Dendritic cell treated with granulocyte-macrophage colony-stimulating factor and Interleukin-4, amounts not matched to agents 40 ng/mL and 50 ng/mL, for 4 days (primary cell): ENCODE measurements at regions of chr2 and their contacts with region 1.

Region 1: DNA sequence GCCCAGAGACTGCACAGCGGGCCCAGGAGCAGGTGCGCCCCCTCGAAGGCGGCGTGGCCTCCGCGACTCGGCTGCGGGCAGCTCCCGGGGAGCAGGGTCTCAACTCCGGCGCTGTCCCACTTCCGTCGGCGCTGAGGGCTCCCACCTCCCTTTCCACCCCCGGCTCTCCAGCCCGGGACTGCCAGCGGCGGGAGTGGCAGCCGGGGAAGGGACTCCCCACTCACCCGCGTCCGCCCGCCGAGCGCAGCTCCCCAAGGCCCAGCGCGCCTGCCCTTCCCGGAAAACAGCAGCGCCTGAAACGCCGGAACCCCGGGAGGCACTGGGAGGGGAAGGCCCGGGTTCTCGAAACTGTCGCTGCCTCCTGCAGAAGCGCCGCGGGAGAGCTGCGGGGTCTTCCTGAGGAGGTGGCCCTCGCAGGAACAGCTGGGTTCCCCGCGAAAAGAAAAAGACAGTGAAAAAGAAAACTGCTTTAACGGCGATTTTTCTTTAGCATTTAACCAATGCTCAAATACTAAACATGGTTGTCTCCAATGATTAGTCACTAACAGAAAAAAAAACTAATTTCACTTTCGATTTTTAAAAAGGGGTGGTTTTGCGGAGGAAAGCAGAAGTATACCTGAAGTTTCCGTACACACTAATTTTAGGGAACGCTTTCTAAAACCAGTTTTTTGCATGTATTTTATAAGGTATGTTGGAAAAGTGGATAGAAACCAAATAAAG is at the start of gene NMI:
- H3K4me3 Mint-ChIP-seq: peak within 1 kb of the TSS; percentile 83
- H3K27ac Mint-ChIP-seq: peak within 1 kb of the TSS; percentile 96
- H3K4me1 Mint-ChIP-seq: peaks cover 38% of the 10 kb centered on the region
- H3K27me3 Mint-ChIP-seq: no peaks in the 10 kb centered on the region

Region 2: DNA sequence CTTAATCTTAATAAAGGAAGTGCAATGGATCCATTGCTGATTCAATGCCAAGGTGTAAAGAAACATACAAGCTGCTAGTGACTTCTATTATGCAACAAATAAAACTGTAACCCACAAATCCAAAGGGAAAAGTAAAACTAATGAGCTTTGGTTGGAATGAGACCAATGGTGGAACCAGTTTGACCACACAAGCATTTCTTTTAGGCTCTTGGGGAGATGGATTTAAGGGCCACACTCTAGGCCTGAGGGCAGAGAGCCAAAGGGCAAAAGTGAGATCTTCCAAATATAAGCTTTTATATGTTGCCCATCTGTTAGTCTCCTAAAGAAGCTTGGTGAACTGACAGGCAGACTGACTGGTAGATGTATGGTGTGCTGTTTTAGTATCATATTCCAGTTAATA is 1660.5 kb before region 1 on chr2:
- intact Hi-C with region 1: no loop called
- H3K4me3 Mint-ChIP-seq: no peak overlapping the region
- H3K27ac Mint-ChIP-seq: no peak overlapping the region
- H3K4me1 Mint-ChIP-seq: peaks cover 10% of the 10 kb centered on the region
- H3K27me3 Mint-ChIP-seq: no peaks in the 10 kb centered on the region

Region 3: DNA sequence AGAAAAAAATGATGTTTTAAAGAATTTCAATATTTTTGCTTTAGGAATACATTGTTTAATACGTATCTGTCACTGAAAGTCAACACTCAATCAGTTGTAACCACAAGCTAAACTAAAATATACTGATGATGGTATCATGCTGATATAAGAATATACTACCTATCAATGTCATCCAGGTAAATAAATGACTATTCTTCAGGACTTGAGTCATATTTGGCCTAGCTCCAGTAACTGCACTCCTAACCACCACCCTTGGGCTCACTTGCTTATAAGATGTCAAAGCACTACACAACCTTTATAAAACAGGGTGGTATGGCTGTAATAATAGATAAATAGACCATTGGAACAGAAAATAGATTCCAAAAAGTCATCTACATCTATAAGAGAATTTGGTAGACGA is 850.9 kb before region 1 on chr2:
- intact Hi-C with region 1: no loop called
- H3K4me3 Mint-ChIP-seq: no peak overlapping the region
- H3K27ac Mint-ChIP-seq: no peak overlapping the region
- H3K4me1 Mint-ChIP-seq: no peaks in the 10 kb centered on the region
- H3K27me3 Mint-ChIP-seq: no peaks in the 10 kb centered on the region

Region 4: GRCh38 chr2:151111599-151112278 is 177.8 kb before region 1 on chr2:
- intact Hi-C with region 1: no loop called
- H3K4me3 Mint-ChIP-seq: no peak overlapping the region
- H3K27ac Mint-ChIP-seq: no peak overlapping the region
- H3K4me1 Mint-ChIP-seq: no peaks in the 10 kb centered on the region
- H3K27me3 Mint-ChIP-seq: no peaks in the 10 kb centered on the region

Region 5: DNA sequence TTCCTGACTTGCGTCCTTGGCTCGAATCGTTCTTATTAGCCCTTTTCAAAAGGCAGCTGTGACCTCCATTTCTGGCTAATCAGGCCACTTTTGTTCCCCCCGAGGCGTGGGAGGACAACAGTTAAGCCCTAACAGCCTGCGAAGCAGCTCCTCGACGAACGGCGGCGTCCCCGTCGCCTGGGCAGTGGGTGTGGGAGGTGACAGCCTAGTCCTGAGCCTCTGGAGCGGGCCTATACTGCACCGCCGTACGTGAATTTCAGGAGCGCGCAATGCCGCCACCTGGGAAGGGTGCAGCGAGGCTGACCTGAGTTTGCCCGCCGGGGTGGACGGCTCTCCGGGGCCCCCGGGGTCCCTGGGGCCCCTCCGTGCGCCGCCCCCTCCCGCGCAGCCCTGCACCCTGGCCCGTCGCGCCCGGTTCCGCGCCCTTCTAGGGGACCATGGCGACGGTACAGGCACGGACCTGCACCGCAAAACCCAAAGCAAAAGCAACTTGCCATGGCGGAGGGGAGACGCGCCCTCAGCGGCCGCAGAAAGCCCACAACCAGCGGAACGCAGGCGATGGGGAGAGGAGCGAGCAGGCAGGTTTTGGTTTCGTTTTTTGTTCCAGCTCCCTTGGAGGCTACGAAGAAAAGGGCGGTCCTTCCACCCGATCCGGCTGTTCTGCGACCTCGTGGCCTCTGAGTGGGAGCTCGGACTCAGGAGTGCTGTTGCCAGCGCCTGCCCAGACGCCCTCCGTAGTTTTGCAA is 28.1 kb before region 1 on chr2 and contains the start of gene RBM43:
- intact Hi-C with region 1: loop called (anchors 2 kb)
- H3K4me3 Mint-ChIP-seq: peak within 1 kb of the TSS; percentile 82
- H3K27ac Mint-ChIP-seq: peak within 1 kb of the TSS; percentile 89
- H3K4me1 Mint-ChIP-seq: peaks cover 27% of the 10 kb centered on the region
- H3K27me3 Mint-ChIP-seq: no peaks in the 10 kb centered on the region

Region 6: DNA sequence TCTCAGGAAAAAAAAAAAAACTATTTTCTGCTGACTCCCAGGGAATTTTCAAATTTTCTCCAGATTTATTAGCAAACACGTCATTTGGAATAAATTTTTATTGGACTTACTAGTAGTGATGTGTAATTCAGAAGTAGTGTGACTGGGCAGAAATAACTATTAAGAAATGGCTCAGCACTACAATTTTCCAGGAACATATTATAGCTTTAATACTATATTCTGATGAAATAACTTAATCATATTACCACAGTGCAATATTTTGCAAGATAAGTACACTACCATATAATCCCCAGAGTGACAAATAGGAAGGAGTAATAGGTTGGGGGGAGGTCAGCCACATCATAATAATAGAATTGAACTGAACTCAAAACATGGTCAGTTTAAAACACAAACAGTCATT is 48.1 kb after region 1 on chr2:
- intact Hi-C with region 1: no loop called
- H3K4me3 Mint-ChIP-seq: no peak overlapping the region
- H3K27ac Mint-ChIP-seq: no peak overlapping the region
- H3K4me1 Mint-ChIP-seq: peaks cover 35% of the 10 kb centered on the region
- H3K27me3 Mint-ChIP-seq: no peaks in the 10 kb centered on the region

Region 7: DNA sequence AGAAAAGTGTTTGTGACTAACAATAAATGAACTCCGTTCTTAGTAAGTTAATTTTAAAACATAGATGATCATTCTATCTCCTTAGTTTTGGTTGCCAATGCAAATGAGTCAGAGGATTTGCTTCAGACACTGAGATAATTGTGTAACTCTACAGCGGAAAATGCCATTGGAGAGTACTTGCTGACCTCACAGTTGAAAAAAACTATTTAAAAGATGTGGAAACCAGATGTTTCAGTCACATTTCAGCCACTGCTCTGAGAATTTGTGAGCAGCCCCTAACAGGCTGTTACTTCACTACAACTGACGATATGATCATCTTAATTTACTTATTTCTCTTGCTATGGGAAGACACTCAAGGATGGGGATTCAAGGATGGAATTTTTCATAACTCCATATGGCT is 67.8 kb after region 1 on chr2 and contains the start of gene TNFAIP6:
- intact Hi-C with region 1: loop called (anchors 5 kb)
- H3K4me3 Mint-ChIP-seq: no peak within 1 kb of the TSS
- H3K27ac Mint-ChIP-seq: no peak within 1 kb of the TSS
- H3K4me1 Mint-ChIP-seq: peaks cover 33% of the 10 kb centered on the region
- H3K27me3 Mint-ChIP-seq: no peaks in the 10 kb centered on the region

Region 8: GRCh38 chr2:151409601-151410484 is 120.3 kb after region 1 on chr2 and contains the start of gene RIF1:
- intact Hi-C with region 1: loop called (anchors 1 kb)
- H3K4me3 Mint-ChIP-seq: peak within 1 kb of the TSS; percentile 99
- H3K27ac Mint-ChIP-seq: peak within 1 kb of the TSS; percentile 97
- H3K4me1 Mint-ChIP-seq: peaks cover 17% of the 10 kb centered on the region
- H3K27me3 Mint-ChIP-seq: no peaks in the 10 kb centered on the region